Activated T-helper 2 cell treated with anti-CD3 and anti-CD28 coated beads, Interferon-gamma antibody, Interleukin-2, Interleukin-4, amounts not matched to agents 10 μg/mL and 5 μg/mL and 100 μg/mL, durations not matched to agents 14 hours and 24 hours and 36 hours (primary cell): ENCODE measurements at regions of chr2 and their contacts with region 1.

Region 1: GRCh38 chr2:178522950-178523595 is 42.8 kb downstream of the PLEKHA3 start:
- DNase-seq: peak; percentile 81
- H3K4me3 Mint-ChIP-seq: peak overlapping the region; percentile 99
- H3K27ac Mint-ChIP-seq: peak overlapping the region; percentile 95
- H3K4me1 Mint-ChIP-seq: peaks cover 55% of the 10 kb centered on the region
- H3K27me3 Mint-ChIP-seq: no peaks in the 10 kb centered on the region

Region 2: DNA sequence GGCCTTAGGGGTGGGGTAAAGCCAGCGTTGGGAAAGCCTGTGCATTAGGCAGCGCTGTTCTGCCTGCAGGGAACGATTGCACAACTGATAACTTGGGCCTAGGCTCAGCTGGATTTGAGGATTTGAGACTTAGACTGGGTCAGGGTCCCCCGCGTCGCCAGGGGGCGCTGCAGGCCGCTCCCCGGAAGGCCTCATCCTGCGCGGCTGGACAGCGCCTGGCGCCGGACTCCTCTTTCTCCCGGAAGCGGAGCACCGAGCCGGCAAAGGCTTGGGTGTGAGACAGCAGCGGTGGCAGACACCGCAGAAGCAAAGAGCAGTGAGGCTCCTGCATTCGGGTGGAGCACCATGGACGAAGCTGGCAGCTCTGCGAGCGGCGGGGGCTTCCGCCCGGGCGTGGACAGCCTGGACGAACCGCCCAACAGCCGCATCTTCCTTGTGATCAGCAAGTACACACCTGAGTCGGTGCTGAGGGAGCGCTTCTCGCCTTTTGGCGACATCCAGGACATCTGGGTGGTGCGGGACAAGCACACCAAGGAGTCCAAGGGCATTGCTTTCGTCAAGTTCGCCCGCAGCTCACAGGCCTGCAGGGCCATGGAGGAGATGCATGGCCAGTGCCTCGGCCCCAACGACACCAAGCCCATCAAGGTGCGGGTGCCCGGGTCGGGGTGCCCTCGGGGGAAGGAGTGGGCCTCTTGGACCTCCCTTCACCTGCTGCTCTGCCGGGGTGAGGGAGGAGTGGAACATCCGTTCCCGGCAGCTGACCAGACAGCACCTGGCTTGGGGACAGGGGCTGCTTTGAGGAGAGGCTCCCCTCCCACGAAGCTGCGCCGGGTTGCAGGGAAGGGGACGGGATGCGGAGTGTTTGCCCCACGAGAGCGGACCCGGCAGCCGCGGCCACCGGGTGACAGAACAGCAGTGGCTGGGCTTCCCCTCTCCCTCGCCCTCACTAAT is 410.6 kb before region 1 on chr2 and contains the start of gene RBM45:
- intact Hi-C with region 1: loop called (anchors 5 kb)
- DNase-seq: peak; percentile 81
- H3K4me3 Mint-ChIP-seq: peak within 1 kb of the TSS; percentile 87
- H3K27ac Mint-ChIP-seq: peak within 1 kb of the TSS; percentile 65
- H3K4me1 Mint-ChIP-seq: peaks cover 30% of the 10 kb centered on the region
- H3K27me3 Mint-ChIP-seq: no peaks in the 10 kb centered on the region
- total RNA-seq, gene RBM45: 14.3 and 19.8 TPM in 2 replicates

Region 3: GRCh38 chr2:178280244-178280852 is 242.7 kb before region 1 on chr2:
- intact Hi-C with region 1: no loop called
- DNase-seq: no peak
- H3K4me3 Mint-ChIP-seq: no peak overlapping the region
- H3K27ac Mint-ChIP-seq: no peak overlapping the region
- H3K4me1 Mint-ChIP-seq: peaks cover 6% of the 10 kb centered on the region
- H3K27me3 Mint-ChIP-seq: peaks cover 19% of the 10 kb centered on the region

Region 4: GRCh38 chr2:178450774-178451525 is 72.1 kb before region 1 on chr2 and contains the starts of genes PJVK and PRKRA:
- intact Hi-C with region 1: loop called (anchors 2 kb)
- DNase-seq: peak; percentile 94
- H3K4me3 Mint-ChIP-seq: peak within 1 kb of the TSS; percentile 92
- H3K27ac Mint-ChIP-seq: peak within 1 kb of the TSS; percentile 99
- H3K4me1 Mint-ChIP-seq: peaks cover 29% of the 10 kb centered on the region
- H3K27me3 Mint-ChIP-seq: peaks cover 6% of the 10 kb centered on the region
- total RNA-seq, gene PJVK: 1.7 and 2.0 TPM in 2 replicates
- total RNA-seq, gene PRKRA: 65.8 and 67.8 TPM in 2 replicates

Region 5: DNA sequence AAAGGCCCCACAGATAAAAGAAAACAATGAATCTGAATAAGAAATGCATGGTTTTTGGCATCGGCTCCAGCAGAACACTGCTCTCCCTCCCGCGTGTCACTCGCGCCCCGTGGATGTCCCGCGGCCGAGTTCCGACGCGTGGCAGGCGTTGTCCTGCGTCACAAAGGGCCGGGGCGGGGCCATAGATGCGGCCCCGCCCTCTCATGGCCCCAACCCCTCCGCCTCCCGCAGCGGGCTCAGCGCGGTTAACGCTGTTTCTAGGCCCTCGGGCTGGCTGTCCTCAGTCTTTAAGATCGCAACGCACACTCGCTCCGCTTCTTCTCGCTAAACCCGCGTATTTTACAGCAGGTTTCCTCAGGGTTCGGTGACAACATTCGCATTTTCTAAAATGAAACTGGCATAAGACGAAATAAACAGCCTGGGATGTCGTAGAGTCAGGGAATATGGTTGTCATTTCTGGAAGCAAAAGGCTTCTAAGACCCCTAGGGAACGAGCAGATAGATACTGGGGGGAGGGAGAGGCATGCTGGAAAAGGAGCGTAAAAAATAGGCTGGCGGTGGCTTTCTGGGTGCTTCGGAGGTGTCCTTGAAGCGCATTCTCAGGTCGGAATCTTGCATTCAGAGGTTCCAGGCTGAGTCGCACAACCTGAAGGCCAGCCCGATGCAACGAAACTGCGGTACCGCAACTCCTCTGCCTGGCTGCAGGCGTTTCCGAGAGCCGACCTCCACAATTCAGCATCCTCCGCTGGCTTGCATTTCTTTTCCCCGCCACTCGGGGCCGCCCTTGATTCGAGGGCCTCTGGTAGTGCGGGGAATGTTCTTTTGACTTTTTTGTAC is 44.4 kb before region 1 on chr2 and contains the start of gene FKBP7:
- intact Hi-C with region 1: loop called (anchors 2 kb)
- DNase-seq: peak; percentile 74
- H3K4me3 Mint-ChIP-seq: peak within 1 kb of the TSS; percentile 90
- H3K27ac Mint-ChIP-seq: peak within 1 kb of the TSS; percentile 92
- H3K4me1 Mint-ChIP-seq: peaks cover 36% of the 10 kb centered on the region
- H3K27me3 Mint-ChIP-seq: no peaks in the 10 kb centered on the region
- total RNA-seq, gene FKBP7: 3.2 and 6.6 TPM in 2 replicates

Region 6: DNA sequence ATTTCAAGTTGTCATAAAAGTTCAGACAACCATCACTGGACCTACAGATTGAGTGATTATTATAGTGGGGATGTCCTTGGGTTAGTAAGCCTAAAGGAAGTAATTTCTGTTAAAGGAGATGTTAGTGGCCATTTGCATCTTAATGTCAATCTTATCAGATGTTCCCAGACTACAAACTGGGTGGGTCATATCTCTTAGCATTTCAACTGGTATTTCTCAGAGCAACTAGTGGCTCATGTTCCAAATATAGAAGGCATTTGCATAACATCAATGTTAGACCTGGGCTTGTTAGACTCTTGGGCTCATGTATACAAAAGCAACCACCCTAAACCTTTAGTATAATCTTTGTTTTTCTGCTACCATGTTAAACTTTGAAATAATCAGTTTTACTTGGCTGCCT is 24.9 kb before region 1 on chr2:
- intact Hi-C with region 1: loop called (anchors 1 kb)
- DNase-seq: no peak
- H3K4me3 Mint-ChIP-seq: no peak overlapping the region
- H3K27ac Mint-ChIP-seq: no peak overlapping the region
- H3K4me1 Mint-ChIP-seq: peaks cover 6% of the 10 kb centered on the region
- H3K27me3 Mint-ChIP-seq: no peaks in the 10 kb centered on the region

Region 7: GRCh38 chr2:179106676-179107428 is 583.8 kb after region 1 on chr2:
- intact Hi-C with region 1: loop called (anchors 2 kb)
- DNase-seq: no peak
- H3K4me3 Mint-ChIP-seq: no peak overlapping the region
- H3K27ac Mint-ChIP-seq: peak overlapping the region; percentile 70
- H3K4me1 Mint-ChIP-seq: peaks cover 32% of the 10 kb centered on the region
- H3K27me3 Mint-ChIP-seq: no peaks in the 10 kb centered on the region